ENCODE measurements at regions of chr17 and their contacts with region 1.

Region 1: DNA sequence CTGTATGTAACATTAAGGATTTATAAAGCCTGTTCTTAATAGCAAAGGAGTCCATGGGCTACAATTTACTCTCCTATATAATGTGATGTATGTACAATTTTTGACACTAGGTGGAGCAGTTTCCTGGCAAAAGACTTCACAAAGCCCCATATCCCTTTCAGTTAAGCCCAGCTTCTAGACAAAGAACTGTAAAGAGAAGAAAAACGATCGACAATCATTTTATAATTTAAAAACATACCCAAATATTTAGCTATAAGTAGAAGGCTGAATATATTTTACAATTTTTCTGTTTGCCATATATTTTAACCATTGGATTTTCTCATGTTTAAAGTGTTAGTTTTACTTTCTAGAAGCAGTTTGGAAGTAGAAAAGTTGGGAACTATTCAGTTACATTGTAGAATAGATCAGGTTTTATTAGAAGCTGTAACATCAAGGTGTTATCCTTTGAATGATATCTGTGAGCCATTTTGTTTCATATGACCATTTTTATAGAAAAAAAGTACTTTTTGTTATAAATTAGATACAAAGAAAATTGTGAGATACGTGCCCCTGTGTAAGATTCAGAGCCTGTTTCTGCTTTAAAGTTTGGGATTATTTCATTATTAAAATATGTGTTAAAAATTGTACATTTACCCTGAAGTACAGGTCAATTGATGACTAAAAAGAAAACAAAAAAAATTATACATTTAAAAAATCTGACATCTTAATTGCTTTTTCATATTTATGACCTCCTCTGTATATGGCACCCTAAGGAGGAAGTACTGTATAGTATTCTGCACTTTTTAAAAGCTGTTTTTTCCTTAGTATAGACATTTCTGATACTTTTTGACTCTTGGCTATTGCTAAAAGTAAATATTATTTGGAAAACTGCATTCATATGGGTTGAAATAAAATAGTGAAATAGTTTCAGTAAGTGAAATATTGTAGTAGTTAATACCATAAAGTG is 46.3 kb downstream of the VMP1 start:
- DNase-seq: peak in 5 of 14 experiments; percentile 10 to 89 (median 85)
- ATAC-seq: peak; percentile 93
- H3K4me3 ChIP-seq: peak overlapping the region; percentile 19
- H3K4me3 Mint-ChIP-seq: peak overlapping the region; percentile 45
- H3K27ac ChIP-seq: peak overlapping the region in 1 of 2 donors; percentile 37
- H3K27ac Mint-ChIP-seq: peak overlapping the region; percentile 73
- H3K4me1 ChIP-seq: peaks cover 15% of the 10 kb centered on the region
- H3K4me1 Mint-ChIP-seq: peaks cover 35% of the 10 kb centered on the region
- H3K27me3 ChIP-seq: no peaks in the 10 kb centered on the region
- H3K27me3 Mint-ChIP-seq: no peaks in the 10 kb centered on the region
- CTCF ChIP-seq: peak; percentile 82

Region 2: GRCh38 chr17:59427425-59427921 is 326.3 kb before region 1 on chr17:
- CTCF ChIA-PET with region 1: no interaction called
- POLR2A ChIA-PET with region 1: no interaction called
- intact Hi-C with region 1: no loop called
- DNase-seq: peak in 4 of 14 experiments; percentile 20 to 44 (median 30)
- ATAC-seq: peak; percentile 51
- H3K4me3 ChIP-seq: no peak overlapping the region
- H3K4me3 Mint-ChIP-seq: no peak overlapping the region
- H3K27ac ChIP-seq: no peak overlapping the region
- H3K27ac Mint-ChIP-seq: no peak overlapping the region
- H3K4me1 ChIP-seq: peaks cover 2% of the 10 kb centered on the region
- H3K4me1 Mint-ChIP-seq: peaks cover 6% of the 10 kb centered on the region
- H3K27me3 ChIP-seq: no peaks in the 10 kb centered on the region
- H3K27me3 Mint-ChIP-seq: no peaks in the 10 kb centered on the region
- CTCF ChIP-seq: no peak

Region 3: DNA sequence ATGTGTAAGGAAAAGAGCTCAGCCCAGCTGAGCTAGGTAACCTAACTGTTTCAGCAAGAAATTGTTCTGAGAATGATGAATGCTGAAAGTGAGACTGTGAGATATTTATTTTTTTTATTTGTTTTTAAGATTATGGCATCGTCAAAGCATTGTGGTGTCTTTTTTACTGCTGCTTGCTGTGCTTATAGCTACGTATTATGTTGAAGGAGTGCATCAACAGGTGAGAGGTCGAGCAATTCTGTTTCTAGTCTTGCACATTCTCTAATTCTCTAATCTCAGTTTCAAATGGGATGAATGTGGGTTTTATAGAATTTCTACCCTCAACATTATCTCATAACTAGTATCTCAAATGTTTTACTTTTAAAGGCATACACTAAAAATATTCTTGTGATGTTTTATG is 16.5 kb before region 1 on chr17:
- CTCF ChIA-PET with region 1: no interaction called
- POLR2A ChIA-PET with region 1: no interaction called
- intact Hi-C with region 1: no loop called
- DNase-seq: no peak
- ATAC-seq: no peak
- H3K4me3 ChIP-seq: no peak overlapping the region
- H3K4me3 Mint-ChIP-seq: no peak overlapping the region
- H3K27ac ChIP-seq: no peak overlapping the region
- H3K27ac Mint-ChIP-seq: no peak overlapping the region
- H3K4me1 ChIP-seq: no peaks in the 10 kb centered on the region
- H3K4me1 Mint-ChIP-seq: no peaks in the 10 kb centered on the region
- H3K27me3 ChIP-seq: no peaks in the 10 kb centered on the region
- H3K27me3 Mint-ChIP-seq: no peaks in the 10 kb centered on the region
- CTCF ChIP-seq: no peak

Region 4: DNA sequence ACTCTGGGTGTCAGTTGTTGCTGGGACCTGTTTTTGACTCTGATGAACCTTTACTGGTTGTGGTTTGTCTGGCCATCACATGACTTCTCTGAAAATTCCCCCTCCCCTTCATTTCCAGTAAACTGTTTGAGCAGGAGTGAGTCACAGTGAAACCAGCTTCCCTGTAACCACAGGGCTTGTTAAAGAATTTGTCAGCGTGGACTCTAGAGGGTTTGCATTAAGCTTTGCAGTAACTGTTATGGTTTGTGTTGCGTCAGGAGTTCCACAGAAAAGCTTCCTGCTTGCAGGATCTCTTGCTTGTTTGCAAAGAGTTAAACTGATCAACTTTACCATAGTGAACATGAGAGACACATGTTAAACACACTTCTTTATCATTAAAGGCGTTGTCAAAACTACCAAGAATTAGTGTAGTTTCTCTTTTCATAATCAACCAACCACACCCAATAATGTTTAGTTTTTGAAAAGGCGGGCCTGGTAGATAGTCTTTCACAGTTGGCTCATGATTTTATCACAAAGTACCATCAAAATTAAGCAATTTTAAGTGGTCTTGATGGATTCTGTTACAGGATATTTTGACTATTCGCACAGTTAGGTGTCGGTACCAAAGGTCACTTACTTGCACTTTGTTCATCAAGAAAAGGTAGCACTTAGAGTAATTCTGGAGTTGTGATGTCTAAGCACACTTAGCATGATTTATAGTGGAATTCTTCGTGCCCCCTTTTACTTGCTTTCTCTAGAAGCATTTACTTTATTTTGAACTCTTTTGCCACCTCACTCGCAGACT is 32.9 kb after region 1 on chr17:
- CTCF ChIA-PET with region 1: interaction called, 34 read pairs
- POLR2A ChIA-PET with region 1: interaction called, 9 read pairs
- intact Hi-C with region 1: loop called (anchors 2 kb)
- DNase-seq: peak; percentile 40 to 96 (median 65)
- ATAC-seq: peak; percentile 88
- H3K4me3 ChIP-seq: peak overlapping the region; percentile 39
- H3K4me3 Mint-ChIP-seq: peak overlapping the region; percentile 85
- H3K27ac ChIP-seq: peak overlapping the region; percentile 81 to 83
- H3K27ac Mint-ChIP-seq: peak overlapping the region; percentile 93
- H3K4me1 ChIP-seq: peaks cover 42% of the 10 kb centered on the region
- H3K4me1 Mint-ChIP-seq: peaks cover 47% of the 10 kb centered on the region
- H3K27me3 ChIP-seq: no peaks in the 10 kb centered on the region
- H3K27me3 Mint-ChIP-seq: no peaks in the 10 kb centered on the region
- CTCF ChIP-seq: no peak

Region 5: DNA sequence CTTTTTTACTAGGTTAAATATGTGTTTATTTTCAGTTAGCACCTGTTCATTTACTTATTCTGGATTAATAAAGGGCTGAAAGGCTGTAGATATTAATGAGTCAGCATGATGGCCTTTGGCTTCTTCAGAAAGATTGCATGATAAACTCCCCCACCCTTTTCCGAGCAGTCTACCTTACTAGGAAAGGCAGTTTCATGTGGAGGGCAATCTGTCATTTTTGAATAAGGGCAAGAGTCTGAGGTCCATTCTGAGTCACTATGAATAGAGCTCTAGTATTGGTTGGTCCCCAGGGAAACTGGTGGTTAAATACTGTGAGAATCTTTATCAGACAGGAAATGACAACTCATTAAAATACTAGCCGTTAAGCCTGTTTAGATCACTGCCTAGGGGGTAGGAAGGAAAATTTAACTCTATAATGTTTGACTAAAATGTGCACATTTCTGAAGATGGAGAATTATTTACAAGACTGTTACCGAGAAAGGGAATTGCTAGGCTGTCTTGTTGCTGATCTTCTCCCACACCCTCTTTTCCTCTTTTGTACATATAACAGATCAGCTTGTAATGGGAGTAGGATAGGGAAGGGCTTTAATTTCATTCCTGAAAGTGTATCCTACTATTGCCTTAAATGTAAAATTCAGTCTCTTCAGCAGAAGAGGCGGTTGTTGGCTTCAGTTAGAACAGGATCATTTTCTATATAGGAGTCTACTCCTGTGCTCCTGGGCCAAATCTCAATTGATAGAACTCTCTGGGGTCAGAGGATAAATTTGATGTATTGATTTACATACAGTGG is 75.6 kb after region 1 on chr17:
- CTCF ChIA-PET with region 1: interaction called, 14 read pairs
- POLR2A ChIA-PET with region 1: interaction called, 4 read pairs
- intact Hi-C with region 1: no loop called
- DNase-seq: peak in 3 of 14 experiments; percentile 73 to 88 (median 81)
- ATAC-seq: peak; percentile 75
- H3K4me3 ChIP-seq: peak overlapping the region; percentile 33
- H3K4me3 Mint-ChIP-seq: peak overlapping the region; percentile 70
- H3K27ac ChIP-seq: peak overlapping the region; percentile 25 to 63
- H3K27ac Mint-ChIP-seq: peak overlapping the region; percentile 85
- H3K4me1 ChIP-seq: peaks cover 54% of the 10 kb centered on the region
- H3K4me1 Mint-ChIP-seq: peaks cover 66% of the 10 kb centered on the region
- H3K27me3 ChIP-seq: no peaks in the 10 kb centered on the region
- H3K27me3 Mint-ChIP-seq: no peaks in the 10 kb centered on the region
- CTCF ChIP-seq: no peak

Region 6: GRCh38 chr17:59846394-59847165 is 92.8 kb after region 1 on chr17:
- CTCF ChIA-PET with region 1: interaction called, 13 read pairs
- POLR2A ChIA-PET with region 1: interaction called, 4 read pairs
- intact Hi-C with region 1: no loop called
- DNase-seq: peak in 3 of 14 experiments; percentile 62 to 79 (median 76)
- ATAC-seq: peak; percentile 72
- H3K4me3 ChIP-seq: no peak overlapping the region
- H3K4me3 Mint-ChIP-seq: peak overlapping the region; percentile 20
- H3K27ac ChIP-seq: peak overlapping the region; percentile 21 to 35
- H3K27ac Mint-ChIP-seq: peak overlapping the region; percentile 86
- H3K4me1 ChIP-seq: peaks cover 64% of the 10 kb centered on the region
- H3K4me1 Mint-ChIP-seq: peaks cover 62% of the 10 kb centered on the region
- H3K27me3 ChIP-seq: no peaks in the 10 kb centered on the region
- H3K27me3 Mint-ChIP-seq: no peaks in the 10 kb centered on the region
- CTCF ChIP-seq: no peak

Region 7: GRCh38 chr17:60036796-60037612 is 283.2 kb after region 1 on chr17:
- CTCF ChIA-PET with region 1: interaction called, 4 read pairs
- POLR2A ChIA-PET with region 1: no interaction called
- intact Hi-C with region 1: loop called (anchors 5 kb)
- DNase-seq: peak; percentile 43 to 86 (median 59)
- ATAC-seq: peak; percentile 97
- H3K4me3 ChIP-seq: no peak overlapping the region
- H3K4me3 Mint-ChIP-seq: no peak overlapping the region
- H3K27ac ChIP-seq: no peak overlapping the region
- H3K27ac Mint-ChIP-seq: no peak overlapping the region
- H3K4me1 ChIP-seq: peaks cover 8% of the 10 kb centered on the region
- H3K4me1 Mint-ChIP-seq: peaks cover 6% of the 10 kb centered on the region
- H3K27me3 ChIP-seq: peaks cover 0 to 21% of the 10 kb centered on the region in 2 experiments
- H3K27me3 Mint-ChIP-seq: peaks cover 21% of the 10 kb centered on the region
- CTCF ChIP-seq: peak; percentile 83

Measured in CD4-positive, alpha-beta T cell (primary cell).